ENCODE measurements at regions of chr11 and their contacts with region 1.

Region 1: GRCh38 chr11:128522055-128522942 is 65.1 kb downstream of the ETS1 start:
- DNase-seq: peak; percentile 92
- ATAC-seq: peak; percentile 91
- H3K4me3 ChIP-seq: peak overlapping the region; percentile 79 to 98 (median 90)
- H3K4me3 Mint-ChIP-seq: peak overlapping the region; percentile 92
- H3K27ac ChIP-seq: peak overlapping the region; percentile 82 to 90
- H3K27ac Mint-ChIP-seq: peak overlapping the region; percentile 98
- H3K4me1 ChIP-seq: peaks cover 31 to 34% of the 10 kb centered on the region in 2 donors
- H3K4me1 Mint-ChIP-seq: peaks cover 61% of the 10 kb centered on the region
- H3K27me3 ChIP-seq: no peaks in the 10 kb centered on the region
- H3K27me3 Mint-ChIP-seq: no peaks in the 10 kb centered on the region
- CTCF ChIP-seq: no peak

Region 2: GRCh38 chr11:127564810-127565209 is 957.5 kb before region 1 on chr11:
- CTCF ChIA-PET with region 1: no interaction called
- POLR2A ChIA-PET with region 1: no interaction called
- intact Hi-C with region 1: no loop called
- DNase-seq: no peak
- ATAC-seq: no peak
- H3K4me3 ChIP-seq: no peak overlapping the region
- H3K4me3 Mint-ChIP-seq: no peak overlapping the region
- H3K27ac ChIP-seq: no peak overlapping the region
- H3K27ac Mint-ChIP-seq: no peak overlapping the region
- H3K4me1 ChIP-seq: no peaks in the 10 kb centered on the region
- H3K4me1 Mint-ChIP-seq: no peaks in the 10 kb centered on the region
- H3K27me3 ChIP-seq: no peaks in the 10 kb centered on the region
- H3K27me3 Mint-ChIP-seq: no peaks in the 10 kb centered on the region
- CTCF ChIP-seq: no peak

Region 3: GRCh38 chr11:128195057-128195751 is 327.1 kb before region 1 on chr11:
- CTCF ChIA-PET with region 1: no interaction called
- POLR2A ChIA-PET with region 1: no interaction called
- intact Hi-C with region 1: loop called (anchors 5 kb)
- DNase-seq: peak; percentile 68
- ATAC-seq: peak; percentile 68
- H3K4me3 ChIP-seq: no peak overlapping the region
- H3K4me3 Mint-ChIP-seq: peak overlapping the region; percentile 17
- H3K27ac ChIP-seq: no peak overlapping the region
- H3K27ac Mint-ChIP-seq: peak overlapping the region; percentile 12
- H3K4me1 ChIP-seq: peaks cover 11 to 12% of the 10 kb centered on the region in 2 donors
- H3K4me1 Mint-ChIP-seq: peaks cover 17% of the 10 kb centered on the region
- H3K27me3 ChIP-seq: no peaks in the 10 kb centered on the region
- H3K27me3 Mint-ChIP-seq: no peaks in the 10 kb centered on the region
- CTCF ChIP-seq: peak; percentile 57

Region 4: DNA sequence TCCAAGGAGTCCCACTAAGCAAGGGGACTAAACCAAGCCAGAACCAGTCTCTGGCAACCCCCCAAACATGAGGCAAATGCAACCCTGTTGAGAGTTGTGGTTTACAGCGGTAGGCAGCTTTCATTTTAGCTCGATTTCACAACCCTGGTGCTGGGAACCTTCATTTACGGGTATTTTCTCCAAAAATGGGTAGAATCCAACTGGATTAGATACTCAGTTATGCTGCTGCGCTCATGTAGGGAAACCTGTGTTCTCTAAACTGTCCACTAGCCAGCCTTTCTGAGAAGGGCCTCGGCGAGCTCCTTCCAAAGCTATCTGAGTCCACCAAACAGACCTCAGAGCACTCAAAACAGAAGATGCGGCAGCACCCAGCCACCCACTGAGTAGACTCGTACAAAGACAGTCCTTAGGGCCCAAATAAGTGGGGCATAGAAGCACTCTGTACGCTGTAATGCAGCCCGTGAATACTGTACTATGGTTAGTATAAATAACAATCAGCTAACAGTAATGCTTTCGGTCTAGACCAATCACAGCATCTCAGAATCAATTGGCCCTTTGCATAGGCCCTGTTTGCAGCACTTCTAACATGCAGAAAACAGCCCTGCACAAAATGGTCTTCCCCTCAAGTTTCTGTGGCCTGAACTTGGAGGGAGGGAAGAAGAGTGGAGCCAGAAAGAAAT is 39.6 kb before region 1 on chr11:
- CTCF ChIA-PET with region 1: interaction called, 8 read pairs
- POLR2A ChIA-PET with region 1: interaction called, 7 read pairs
- intact Hi-C with region 1: loop called (anchors 1 kb)
- DNase-seq: no peak
- ATAC-seq: peak; percentile 13
- H3K4me3 ChIP-seq: peak overlapping the region in 2 of 5 experiments; percentile 27 to 37
- H3K4me3 Mint-ChIP-seq: peak overlapping the region; percentile 61
- H3K27ac ChIP-seq: peak overlapping the region; percentile 77 to 90
- H3K27ac Mint-ChIP-seq: peak overlapping the region; percentile 95
- H3K4me1 ChIP-seq: peaks cover 82% of the 10 kb centered on the region in 2 donors
- H3K4me1 Mint-ChIP-seq: peaks cover 92% of the 10 kb centered on the region
- H3K27me3 ChIP-seq: no peaks in the 10 kb centered on the region
- H3K27me3 Mint-ChIP-seq: no peaks in the 10 kb centered on the region
- CTCF ChIP-seq: no peak

Region 5: GRCh38 chr11:128552783-128553661 is 30.7 kb after region 1 on chr11:
- CTCF ChIA-PET with region 1: interaction called, 15 read pairs
- POLR2A ChIA-PET with region 1: interaction called, 24 read pairs
- intact Hi-C with region 1: loop called (anchors 1 kb)
- DNase-seq: peak; percentile 93
- ATAC-seq: peak; percentile 80
- H3K4me3 ChIP-seq: peak overlapping the region; percentile 4 to 58 (median 27)
- H3K4me3 Mint-ChIP-seq: peak overlapping the region; percentile 85
- H3K27ac ChIP-seq: peak overlapping the region; percentile 92 to 93
- H3K27ac Mint-ChIP-seq: peak overlapping the region; percentile 99
- H3K4me1 ChIP-seq: peaks cover 62 to 71% of the 10 kb centered on the region in 2 donors
- H3K4me1 Mint-ChIP-seq: peaks cover 70% of the 10 kb centered on the region
- H3K27me3 ChIP-seq: no peaks in the 10 kb centered on the region
- H3K27me3 Mint-ChIP-seq: no peaks in the 10 kb centered on the region
- CTCF ChIP-seq: peak; percentile 10

Region 6: DNA sequence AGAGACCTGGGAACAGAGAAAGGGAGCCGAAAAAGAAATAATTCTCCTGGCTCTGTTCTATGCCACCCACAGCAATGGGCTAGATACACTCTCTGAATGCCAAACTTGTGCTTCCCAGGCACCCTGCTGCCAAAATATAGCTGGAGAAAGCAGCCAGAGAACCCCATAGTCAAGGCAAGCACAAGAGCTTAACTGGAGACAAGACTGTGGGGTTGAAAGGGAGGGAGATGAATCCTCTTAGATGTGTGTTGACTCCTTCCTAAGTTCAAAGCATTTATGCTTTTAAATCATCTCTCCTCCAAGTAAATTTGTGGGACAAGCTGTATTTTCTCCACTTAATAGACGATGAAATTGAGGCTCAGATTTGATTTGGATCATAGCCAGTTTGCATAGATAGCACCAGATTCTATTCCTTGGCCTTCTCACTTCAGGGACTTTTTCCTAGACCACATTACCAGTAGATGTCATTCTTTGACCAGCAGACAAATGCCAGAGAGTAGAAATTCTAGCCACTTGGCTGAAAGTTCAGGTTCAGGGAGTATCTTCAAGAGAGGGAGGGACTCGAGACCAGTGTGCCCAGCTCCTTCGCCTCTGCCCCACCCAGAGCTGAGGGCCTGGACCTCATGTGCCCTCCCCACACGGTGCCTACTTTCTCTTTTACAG is 81.6 kb after region 1 on chr11:
- CTCF ChIA-PET with region 1: interaction called, 11 read pairs
- POLR2A ChIA-PET with region 1: interaction called, 6 read pairs
- intact Hi-C with region 1: no loop called
- DNase-seq: peak; percentile 63
- ATAC-seq: peak; percentile 69
- H3K4me3 ChIP-seq: no peak overlapping the region
- H3K4me3 Mint-ChIP-seq: peak overlapping the region; percentile 35
- H3K27ac ChIP-seq: peak overlapping the region in 1 of 2 donors; percentile 10
- H3K27ac Mint-ChIP-seq: peak overlapping the region; percentile 72
- H3K4me1 ChIP-seq: peaks cover 55 to 59% of the 10 kb centered on the region in 2 donors
- H3K4me1 Mint-ChIP-seq: peaks cover 72% of the 10 kb centered on the region
- H3K27me3 ChIP-seq: no peaks in the 10 kb centered on the region
- H3K27me3 Mint-ChIP-seq: no peaks in the 10 kb centered on the region
- CTCF ChIP-seq: no peak

Region 7: DNA sequence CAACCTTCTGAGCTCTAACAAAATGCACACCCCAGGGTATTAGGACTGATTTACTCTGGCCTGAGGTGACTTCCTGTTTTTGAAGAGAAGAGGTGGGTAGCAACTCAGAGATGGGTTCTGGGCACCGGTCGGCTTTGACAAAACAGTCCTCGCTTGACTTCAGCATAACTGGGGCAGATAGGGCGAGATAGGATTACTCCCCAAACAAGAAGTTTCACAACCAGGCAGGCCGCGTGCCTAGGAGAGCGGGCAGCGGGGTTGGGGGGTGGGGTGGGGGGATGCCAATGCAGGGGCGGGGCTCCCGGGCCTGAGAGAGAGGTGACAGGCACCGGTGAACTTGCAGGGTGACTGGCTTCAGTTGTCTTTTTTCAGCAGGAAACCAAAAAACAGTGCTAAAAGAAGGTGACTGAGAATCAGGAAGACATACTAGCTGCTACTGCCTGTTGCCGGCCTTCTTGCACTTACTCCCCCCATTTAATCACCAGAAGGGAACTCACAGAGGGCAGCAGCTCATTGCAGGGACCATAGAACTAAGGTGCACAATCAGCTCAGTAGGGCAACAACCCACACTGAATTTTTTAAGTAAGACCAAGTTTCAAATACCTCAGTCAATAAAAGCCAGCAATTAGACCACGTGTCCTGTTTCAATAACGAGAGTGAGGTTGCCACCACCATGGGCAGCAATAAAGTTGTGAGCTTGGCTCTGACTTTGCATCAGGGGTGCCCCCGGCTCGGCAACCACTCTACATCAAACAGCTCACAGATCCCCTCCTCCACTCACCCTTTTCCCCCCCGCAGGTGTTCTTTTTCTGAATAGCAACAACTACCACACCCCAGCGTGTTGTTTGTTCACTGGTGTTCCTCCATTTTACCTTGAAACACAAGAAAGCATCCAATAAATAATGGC is 102.2 kb after region 1 on chr11:
- CTCF ChIA-PET with region 1: interaction called, 82 read pairs
- POLR2A ChIA-PET with region 1: interaction called, 27 read pairs
- intact Hi-C with region 1: loop called (anchors 1 kb)
- DNase-seq: peak; percentile 92
- ATAC-seq: peak; percentile 85
- H3K4me3 ChIP-seq: peak overlapping the region in 2 of 5 experiments; percentile 3 to 43
- H3K4me3 Mint-ChIP-seq: peak overlapping the region; percentile 77
- H3K27ac ChIP-seq: peak overlapping the region; percentile 90 to 93
- H3K27ac Mint-ChIP-seq: peak overlapping the region; percentile 99
- H3K4me1 ChIP-seq: peaks cover 98% of the 10 kb centered on the region in 2 donors
- H3K4me1 Mint-ChIP-seq: peaks cover 96% of the 10 kb centered on the region
- H3K27me3 ChIP-seq: no peaks in the 10 kb centered on the region
- H3K27me3 Mint-ChIP-seq: no peaks in the 10 kb centered on the region
- CTCF ChIP-seq: no peak